ENCODE measurements at regions of chr20 and their contacts with region 1.

Region 1: GRCh38 chr20:38337561-38338140 is 8.6 kb upstream of the LBP start:
- DNase-seq: peak in 5 of 10 donors; percentile 29 to 53 (median 42)
- H3K4me3 ChIP-seq: no peak overlapping the region
- H3K27ac ChIP-seq: peak overlapping the region in 47 of 59 donors; percentile 7 to 93 (median 67)
- H3K27me3 ChIP-seq: no peaks in the 10 kb centered on the region
- CTCF ChIP-seq: peak in 55 of 56 donors; percentile 18 to 77 (median 59)

Region 2: DNA sequence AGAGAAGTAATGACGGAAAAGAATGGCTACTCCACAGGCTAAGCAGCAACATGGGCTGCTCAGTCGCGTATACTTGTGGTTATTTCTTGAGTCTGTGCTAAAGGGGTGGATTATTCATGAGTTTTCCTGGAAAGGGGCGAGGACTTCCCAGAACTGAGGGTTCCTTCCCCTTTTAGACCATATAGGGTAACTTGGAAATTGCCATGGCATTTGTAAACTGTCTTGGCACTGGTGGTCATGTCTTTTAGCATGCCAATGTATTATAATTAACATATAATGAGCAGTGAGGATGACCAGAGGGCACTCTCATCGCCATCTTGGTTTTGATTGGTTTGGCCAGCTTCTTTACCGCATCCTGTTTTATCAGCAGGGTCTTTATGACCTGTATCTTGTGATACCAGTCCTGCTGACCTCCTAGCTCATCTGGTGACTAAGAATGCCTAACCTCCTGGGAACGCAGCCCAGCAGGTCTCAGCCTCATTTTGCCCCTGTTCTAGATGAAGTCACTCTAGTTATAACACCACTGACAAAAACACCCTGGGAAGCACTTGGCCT is 20.1 kb after region 1 on chr20:
- intact Hi-C with region 1: loop called in 1 of 2 experiments (anchors 2 kb)
- DNase-seq: no peak
- H3K4me3 ChIP-seq: no peak overlapping the region
- H3K27ac ChIP-seq: no peak overlapping the region
- H3K27me3 ChIP-seq: no peaks in the 10 kb centered on the region
- CTCF ChIP-seq: no peak